Adrenal gland (tissue), 19 donors: ENCODE measurements at regions of chr3 and their contacts with region 1.

Region 1: DNA sequence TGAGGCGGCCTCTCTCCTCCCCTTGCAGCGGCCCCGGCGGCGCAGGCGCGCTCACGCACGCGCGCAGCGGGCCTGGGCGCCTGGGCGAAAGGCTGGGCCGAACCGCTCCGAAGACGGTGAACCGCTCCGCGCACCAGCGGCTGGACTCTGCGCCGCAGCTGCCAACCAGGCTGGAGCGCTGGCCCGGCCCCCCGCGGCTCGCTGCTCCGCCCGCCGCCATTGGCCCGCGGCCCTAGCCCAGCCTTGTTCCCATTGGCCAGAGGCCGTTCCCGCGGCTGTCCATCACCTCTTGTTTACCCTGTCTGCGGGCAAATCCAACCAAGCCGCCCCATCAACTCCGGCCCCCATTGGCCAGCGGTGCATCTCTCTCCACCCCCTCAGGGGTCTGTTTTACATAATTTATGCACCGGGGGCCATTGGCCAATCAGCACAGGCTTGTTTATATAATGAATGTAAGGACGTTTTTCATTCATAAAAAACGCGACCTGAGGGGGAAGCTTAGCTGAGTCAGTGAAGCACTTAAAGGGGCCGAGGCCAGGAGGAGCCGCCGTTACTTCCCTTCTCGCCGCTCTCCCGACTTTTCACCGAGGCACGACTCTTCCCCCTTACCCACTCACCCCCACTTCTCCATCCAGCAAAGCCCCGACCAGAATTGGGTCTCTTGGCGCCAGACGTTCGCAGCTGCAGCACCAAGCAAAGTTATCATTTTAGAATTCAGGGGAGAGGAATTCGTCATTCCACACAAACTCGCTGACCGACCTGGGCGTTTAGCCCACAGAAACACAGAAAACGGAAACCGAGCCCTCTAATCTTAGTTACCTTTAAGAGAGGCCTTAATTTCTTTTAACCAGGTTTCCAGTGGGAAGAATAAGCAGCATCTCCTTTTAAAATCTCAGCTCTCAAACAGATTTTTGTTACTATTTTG is at the start of gene ETV5:
- DNase-seq: peak; percentile 99 to 100 (median 100)
- H3K4me3 ChIP-seq: peak within 1 kb of the TSS; percentile 41 to 87 (median 70)
- H3K27ac ChIP-seq: peak within 1 kb of the TSS; percentile 85 to 96 (median 94)
- H3K4me1 ChIP-seq: peaks cover 21 to 35% of the 10 kb centered on the region in 2 donors
- H3K27me3 ChIP-seq: no peaks in the 10 kb centered on the region
- CTCF ChIP-seq: peak in 2 of 6 experiments; percentile 38
- POLR2A ChIP-seq: peak; percentile 90 to 98
- total RNA-seq, gene ETV5: 17.2 to 114 (median 76.1) TPM

Region 2: DNA sequence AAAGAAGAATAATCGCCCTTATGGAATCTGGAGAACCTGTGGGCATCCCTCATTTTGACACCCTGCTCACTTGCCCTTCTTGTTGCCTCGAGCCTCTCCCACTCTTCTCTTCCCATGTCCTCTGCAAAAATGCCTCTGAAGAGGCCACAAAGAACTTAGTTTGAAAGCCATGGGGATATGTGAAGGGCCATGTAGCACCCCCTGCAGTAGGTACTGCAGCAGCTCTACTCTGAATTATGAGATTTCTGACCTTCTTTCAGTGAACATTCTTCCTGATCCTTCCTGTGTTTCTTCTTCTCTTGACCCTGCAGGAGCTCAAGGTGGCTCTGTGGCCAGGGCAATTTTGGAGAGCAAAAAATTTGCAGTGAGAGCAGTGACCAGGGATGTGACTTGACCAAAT is 141.0 kb before region 1 on chr3:
- intact Hi-C with region 1: no loop called
- DNase-seq: no peak
- H3K4me3 ChIP-seq: no peak overlapping the region
- H3K27ac ChIP-seq: no peak overlapping the region
- H3K4me1 ChIP-seq: no peaks in the 10 kb centered on the region
- H3K27me3 ChIP-seq: no peaks in the 10 kb centered on the region
- CTCF ChIP-seq: no peak
- POLR2A ChIP-seq: no peak

Region 3: GRCh38 chr3:186053954-186054791 is 55.0 kb before region 1 on chr3:
- intact Hi-C with region 1: no loop called
- DNase-seq: peak in 3 of 7 donors; percentile 34 to 77 (median 54)
- H3K4me3 ChIP-seq: no peak overlapping the region
- H3K27ac ChIP-seq: peak overlapping the region in 2 of 5 donors; percentile 53 to 73
- H3K4me1 ChIP-seq: peaks cover 0 to 4% of the 10 kb centered on the region in 2 donors
- H3K27me3 ChIP-seq: no peaks in the 10 kb centered on the region
- CTCF ChIP-seq: no peak
- POLR2A ChIP-seq: no peak

Region 4: GRCh38 chr3:186166036-186166435 is 56.8 kb after region 1 on chr3:
- intact Hi-C with region 1: no loop called
- DNase-seq: no peak
- H3K4me3 ChIP-seq: no peak overlapping the region
- H3K27ac ChIP-seq: no peak overlapping the region
- H3K4me1 ChIP-seq: peaks cover 0 to 7% of the 10 kb centered on the region in 2 donors
- H3K27me3 ChIP-seq: no peaks in the 10 kb centered on the region
- CTCF ChIP-seq: no peak
- POLR2A ChIP-seq: no peak

Region 5: DNA sequence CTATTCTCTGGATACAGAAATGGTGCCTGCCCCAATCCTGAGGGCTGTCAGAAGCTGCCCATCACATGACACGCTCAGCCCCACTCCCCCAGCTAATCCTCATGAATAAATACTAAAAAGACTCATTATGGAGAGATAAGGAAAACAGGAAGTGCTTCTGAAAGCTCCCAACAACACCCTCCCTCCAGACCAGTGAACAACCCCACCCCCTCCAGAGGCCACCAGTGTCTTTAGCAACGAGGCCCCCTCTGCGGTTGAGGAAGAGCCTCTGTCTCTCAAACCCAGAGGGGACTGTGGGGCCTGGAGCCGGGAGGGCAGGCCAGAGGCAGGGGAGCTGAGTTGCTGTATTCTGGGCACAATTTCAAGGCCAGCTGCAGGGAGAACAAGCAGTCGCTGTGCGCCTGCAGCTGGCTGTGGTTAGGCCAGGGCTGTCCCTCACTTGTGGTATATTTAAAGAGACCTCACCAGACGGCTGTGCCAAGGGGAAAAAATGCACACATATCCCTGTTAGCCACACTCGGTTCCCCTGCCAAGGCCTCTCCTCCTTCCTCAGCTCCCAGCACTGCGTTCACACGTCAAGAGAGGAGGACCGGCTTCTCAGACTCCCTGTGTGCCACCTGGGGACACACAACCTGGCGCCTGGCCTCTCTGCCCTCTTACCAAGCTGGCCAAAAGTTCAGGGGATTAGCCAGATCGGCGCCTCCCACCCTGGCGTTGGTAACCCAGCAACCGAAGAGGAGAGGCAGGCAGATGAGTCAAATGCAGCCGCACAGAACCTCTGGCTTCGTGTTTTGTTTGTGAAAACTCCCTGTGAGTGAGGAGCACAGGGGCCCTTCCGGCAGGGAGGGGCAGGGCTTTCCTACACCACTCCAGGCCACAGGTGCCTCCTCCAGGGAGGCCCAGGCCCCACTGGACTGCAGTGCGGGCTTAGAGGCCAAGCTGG is 100.9 kb after region 1 on chr3:
- intact Hi-C with region 1: loop called in 1 of 2 experiments (anchors 10 kb)
- DNase-seq: peak; percentile 70 to 88 (median 86)
- H3K4me3 ChIP-seq: peak overlapping the region in 1 of 4 donors; percentile 27
- H3K27ac ChIP-seq: peak overlapping the region; percentile 75 to 93 (median 89)
- H3K4me1 ChIP-seq: peaks cover 24 to 54% of the 10 kb centered on the region in 2 donors
- H3K27me3 ChIP-seq: no peaks in the 10 kb centered on the region
- CTCF ChIP-seq: no peak
- POLR2A ChIP-seq: peak in 1 of 2 donors; percentile 48